Psoas muscle (tissue), 8 donors: ENCODE measurements at regions of chr4 and their contacts with region 1.

Region 1: GRCh38 chr4:107183155-107183774 is 147.2 kb upstream of the DKK2 start:
- DNase-seq: no peak
- ATAC-seq: peak; percentile 90 to 98 (median 96)
- H3K4me3 ChIP-seq: no peak overlapping the region
- H3K27ac ChIP-seq: no peak overlapping the region
- H3K4me1 ChIP-seq: no peaks in the 10 kb centered on the region
- H3K27me3 ChIP-seq: no peaks in the 10 kb centered on the region
- CTCF ChIP-seq: peak; percentile 89

Region 2: GRCh38 chr4:107037199-107037584 is 146.1 kb before region 1 on chr4:
- intact Hi-C with region 1: loop called in 1 of 2 experiments (anchors 5 kb)
- DNase-seq: peak; percentile 48 to 67
- ATAC-seq: peak in 3 of 4 donors; percentile 60 to 68 (median 67)
- H3K4me3 ChIP-seq: peak overlapping the region; percentile 58
- H3K27ac ChIP-seq: no peak overlapping the region
- H3K4me1 ChIP-seq: peaks cover 6% of the 10 kb centered on the region
- H3K27me3 ChIP-seq: peaks cover 0 to 33% (median 0%) of the 10 kb centered on the region in 3 donors
- CTCF ChIP-seq: peak; percentile 49

Region 3: DNA sequence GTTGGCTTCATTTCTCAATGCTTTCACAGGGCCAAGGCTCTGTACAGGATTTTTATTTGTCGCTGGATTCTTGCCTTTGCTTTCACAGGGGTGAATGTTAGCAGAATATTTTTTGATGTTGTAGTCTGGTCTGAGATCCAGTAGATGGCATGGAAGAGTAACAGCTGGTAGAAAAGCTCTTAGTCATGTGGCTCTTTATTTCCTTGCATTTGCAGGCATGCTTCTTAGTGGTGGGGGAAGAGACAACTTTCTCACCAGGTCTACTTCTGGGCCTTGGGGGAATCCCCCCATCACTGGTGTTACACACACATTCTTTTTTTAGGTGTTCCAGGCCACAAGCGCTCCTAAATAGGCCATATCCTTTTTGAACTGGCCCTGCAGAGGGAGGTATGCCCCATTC is 88.9 kb before region 1 on chr4:
- intact Hi-C with region 1: loop called (anchors 1 to 5 kb)
- DNase-seq: no peak
- ATAC-seq: peak; percentile 48 to 84 (median 64)
- H3K4me3 ChIP-seq: no peak overlapping the region
- H3K27ac ChIP-seq: no peak overlapping the region
- H3K4me1 ChIP-seq: peaks cover 13% of the 10 kb centered on the region
- H3K27me3 ChIP-seq: no peaks in the 10 kb centered on the region
- CTCF ChIP-seq: peak; percentile 42